Activated CD8-positive, alpha-beta T cell treated with anti-CD3 and anti-CD28 coated beads for 36 hours (primary cell): ENCODE measurements at regions of chr16 and their contacts with region 1.

Region 1: DNA sequence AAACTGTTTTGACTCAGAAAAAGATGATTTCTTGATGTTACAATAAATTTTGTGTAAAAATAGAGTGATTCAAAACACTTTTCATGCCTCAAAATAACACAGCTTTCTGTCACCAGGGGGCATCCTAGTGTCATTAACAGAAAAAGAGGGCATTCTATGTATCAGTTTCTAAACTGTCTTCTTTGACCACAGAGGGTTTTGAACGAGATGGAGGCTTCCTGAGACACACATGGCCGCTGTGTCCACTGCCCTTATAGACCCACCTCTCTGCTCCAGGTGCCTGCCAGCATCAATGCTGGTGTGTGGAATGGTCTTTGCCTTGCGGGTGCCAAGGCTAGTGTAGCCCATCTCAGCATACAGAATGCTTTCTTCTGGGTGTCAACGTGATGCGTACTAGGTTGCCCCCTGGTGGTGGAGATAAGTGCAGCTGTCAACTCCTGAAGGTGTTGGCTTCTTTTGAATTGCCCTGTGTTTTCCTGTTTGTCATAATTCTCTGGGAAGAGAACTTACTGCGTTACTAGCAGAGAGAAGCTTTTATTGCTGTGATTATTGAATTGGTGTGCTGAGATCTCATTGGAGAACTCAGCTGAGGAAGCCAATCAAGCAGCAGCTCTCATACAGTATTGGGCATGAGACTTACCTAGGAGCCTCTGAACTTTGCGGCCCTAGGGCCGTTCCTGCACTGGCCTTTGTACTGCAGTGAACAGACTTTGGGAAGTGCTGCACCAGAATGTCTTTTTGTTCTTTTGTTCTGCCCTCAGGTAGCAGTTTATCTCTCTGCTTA is 38.6 kb downstream of the USP10 start:
- DNase-seq: peak; percentile 89
- ATAC-seq: peak; percentile 85
- H3K4me3 Mint-ChIP-seq: no peak overlapping the region
- H3K27ac Mint-ChIP-seq: peak overlapping the region; percentile 13
- H3K4me1 Mint-ChIP-seq: peaks cover 60% of the 10 kb centered on the region
- H3K27me3 Mint-ChIP-seq: no peaks in the 10 kb centered on the region
- CTCF ChIP-seq: peak; percentile 94

Region 2: GRCh38 chr16:84672276-84673202 is 65.9 kb before region 1 on chr16:
- CTCF ChIA-PET with region 1: interaction called, 50 read pairs
- POLR2A ChIA-PET with region 1: no interaction called
- intact Hi-C with region 1: no loop called
- DNase-seq: peak; percentile 86
- ATAC-seq: peak; percentile 97
- H3K4me3 Mint-ChIP-seq: no peak overlapping the region
- H3K27ac Mint-ChIP-seq: no peak overlapping the region
- H3K4me1 Mint-ChIP-seq: peaks cover 6% of the 10 kb centered on the region
- H3K27me3 Mint-ChIP-seq: no peaks in the 10 kb centered on the region
- CTCF ChIP-seq: peak; percentile 90

Region 3: GRCh38 chr16:84699712-84700445 is 38.6 kb before region 1 on chr16 and contains the start of gene USP10:
- CTCF ChIA-PET with region 1: interaction called, 12 read pairs
- POLR2A ChIA-PET with region 1: interaction called, 4 read pairs
- intact Hi-C with region 1: no loop called
- DNase-seq: peak; percentile 85
- ATAC-seq: peak; percentile 84
- H3K4me3 Mint-ChIP-seq: peak within 1 kb of the TSS; percentile 98
- H3K27ac Mint-ChIP-seq: peak within 1 kb of the TSS; percentile 96
- H3K4me1 Mint-ChIP-seq: peaks cover 36% of the 10 kb centered on the region
- H3K27me3 Mint-ChIP-seq: no peaks in the 10 kb centered on the region
- CTCF ChIP-seq: no peak
- total RNA-seq, gene USP10: 116 TPM

Region 4: DNA sequence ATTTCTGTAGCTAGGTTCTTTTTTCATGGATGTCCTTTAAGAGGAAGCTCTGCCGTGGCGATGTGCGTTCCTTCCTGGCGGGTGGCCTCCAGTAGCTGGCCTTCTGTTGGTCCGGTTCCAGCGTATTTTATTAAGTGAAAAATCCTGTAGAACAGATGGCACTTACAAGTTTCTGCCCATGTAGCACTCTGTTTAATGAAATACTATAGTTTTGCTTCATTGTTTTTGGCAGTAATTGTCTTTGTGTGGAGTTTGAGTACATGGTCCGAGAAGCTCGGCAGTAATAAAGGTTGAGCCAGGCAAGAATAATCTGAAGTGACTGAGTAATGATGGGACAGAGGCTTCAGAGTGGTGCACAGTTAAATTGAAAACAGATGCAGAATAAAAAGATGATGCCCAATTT is 18.3 kb before region 1 on chr16:
- CTCF ChIA-PET with region 1: interaction called, 140 read pairs
- POLR2A ChIA-PET with region 1: interaction called, 4 read pairs
- intact Hi-C with region 1: no loop called
- DNase-seq: no peak
- ATAC-seq: no peak
- H3K4me3 Mint-ChIP-seq: no peak overlapping the region
- H3K27ac Mint-ChIP-seq: no peak overlapping the region
- H3K4me1 Mint-ChIP-seq: peaks cover 58% of the 10 kb centered on the region
- H3K27me3 Mint-ChIP-seq: no peaks in the 10 kb centered on the region
- CTCF ChIP-seq: no peak

Region 5: DNA sequence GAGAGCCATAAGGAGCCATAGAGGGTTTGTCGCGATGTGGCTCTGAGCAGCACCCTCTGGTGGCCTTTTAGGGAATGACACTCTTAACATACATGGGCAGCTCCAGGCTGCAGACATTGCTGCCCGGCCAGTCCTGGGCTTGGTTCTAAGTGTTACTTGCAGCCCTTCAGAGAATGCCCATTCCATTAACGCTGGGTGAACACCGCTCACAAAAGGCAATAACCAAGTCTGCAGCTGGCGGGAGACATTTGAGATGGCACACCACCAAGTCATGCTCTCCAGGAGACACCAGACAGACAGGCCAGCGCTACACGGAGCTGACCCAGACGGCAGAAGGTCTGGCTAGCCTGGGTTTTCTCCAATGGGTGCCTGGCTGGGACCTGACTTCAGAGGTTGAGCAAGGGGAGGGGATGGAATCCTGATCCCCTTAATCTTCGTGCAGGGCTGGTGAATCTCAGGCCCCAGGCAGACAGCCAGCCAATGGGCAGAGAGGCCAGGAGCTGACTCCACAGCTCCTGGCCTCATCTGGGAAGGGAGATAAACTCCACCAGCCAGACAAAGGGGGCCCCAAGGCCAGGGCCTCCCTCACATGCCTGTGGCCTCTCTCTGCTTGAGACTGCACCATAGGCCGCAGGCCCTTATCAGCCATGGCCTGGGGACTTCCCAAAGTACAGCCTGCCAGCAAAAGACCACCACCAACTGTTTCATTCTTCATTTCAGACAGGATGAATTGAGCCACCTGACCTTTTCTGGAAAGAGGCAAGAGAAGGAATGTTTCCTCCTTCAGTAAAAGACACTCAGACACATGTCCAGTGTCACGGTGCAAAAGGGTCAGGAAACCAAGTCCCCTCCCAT is 214.1 kb after region 1 on chr16:
- CTCF ChIA-PET with region 1: interaction called, 16 read pairs
- POLR2A ChIA-PET with region 1: no interaction called
- intact Hi-C with region 1: no loop called
- DNase-seq: peak; percentile 82
- ATAC-seq: peak; percentile 95
- H3K4me3 Mint-ChIP-seq: no peak overlapping the region
- H3K27ac Mint-ChIP-seq: no peak overlapping the region
- H3K4me1 Mint-ChIP-seq: peaks cover 2% of the 10 kb centered on the region
- H3K27me3 Mint-ChIP-seq: peaks cover 3% of the 10 kb centered on the region
- CTCF ChIP-seq: peak; percentile 84